ENCODE measurements at regions of chr10 and their contacts with region 1.

Region 1: DNA sequence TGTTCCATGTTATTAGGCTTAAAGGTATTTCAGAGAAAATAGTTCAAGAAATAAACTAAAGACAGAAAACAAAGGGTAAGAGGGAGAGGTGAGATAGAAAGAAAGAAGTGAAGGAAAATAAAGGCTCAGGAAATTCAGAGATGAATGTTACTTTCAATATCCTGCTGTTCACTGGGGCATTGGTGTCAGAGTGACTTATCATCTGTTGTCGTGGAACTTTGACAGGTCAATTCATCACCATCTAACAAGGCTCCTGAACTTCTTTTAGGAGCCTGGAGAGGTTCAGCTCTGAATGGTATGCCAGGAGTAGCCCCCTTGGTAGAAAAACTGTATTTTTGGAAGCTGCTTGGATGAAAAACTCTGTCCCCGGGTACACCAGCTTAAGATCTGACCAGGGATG is 100.1 kb downstream of the KLF6 start:
- DNase-seq: no peak
- H3K4me3 Mint-ChIP-seq: no peak overlapping the region
- H3K27ac Mint-ChIP-seq: no peak overlapping the region
- H3K4me1 Mint-ChIP-seq: peaks cover 15% of the 10 kb centered on the region
- H3K27me3 Mint-ChIP-seq: no peaks in the 10 kb centered on the region

Region 2: DNA sequence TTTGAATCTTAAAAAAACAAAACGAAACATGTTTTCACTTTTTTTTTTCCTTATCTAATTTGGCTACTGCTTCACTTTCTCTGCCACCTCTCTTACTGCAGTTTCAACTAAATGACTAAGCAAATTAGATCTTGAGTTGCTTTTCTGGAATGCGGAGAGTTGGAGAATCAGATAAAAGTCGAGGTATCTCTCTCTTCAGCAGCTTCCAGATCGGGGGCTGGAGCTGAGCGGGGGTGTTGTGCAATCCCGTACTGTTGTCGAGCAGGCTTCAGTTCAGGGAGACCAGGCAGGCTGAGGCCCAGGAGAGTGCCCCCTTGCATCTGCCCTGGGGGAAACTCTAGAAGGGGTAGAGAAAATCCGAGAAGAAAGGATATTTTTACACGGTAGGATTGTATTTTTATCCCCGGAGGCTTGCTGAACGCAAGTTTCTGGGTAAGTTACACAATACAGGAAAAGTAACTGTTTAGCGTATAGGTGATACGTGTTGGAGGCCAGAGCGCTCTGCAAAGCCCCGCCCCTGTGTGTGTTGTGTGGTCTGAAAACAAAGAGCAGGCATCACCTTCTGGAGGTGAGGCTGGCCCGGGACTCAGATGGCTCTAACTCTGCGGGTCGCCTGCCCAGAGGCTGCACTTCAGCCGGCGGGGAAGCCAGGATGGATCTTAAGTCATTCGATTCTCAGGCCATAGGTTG is 16.5 kb before region 1 on chr10:
- intact Hi-C with region 1: loop called (anchors 2 kb)
- DNase-seq: peak; percentile 89
- H3K4me3 Mint-ChIP-seq: peak overlapping the region; percentile 86
- H3K27ac Mint-ChIP-seq: peak overlapping the region; percentile 92
- H3K4me1 Mint-ChIP-seq: peaks cover 34% of the 10 kb centered on the region
- H3K27me3 Mint-ChIP-seq: peaks cover 2% of the 10 kb centered on the region

Measured in activated CD4-positive, alpha-beta T cell treated with anti-CD3 and anti-CD28 coated beads, Interleukin-2, amount 10 ng/mL, durations not matched to agents 24 days and 14 days (primary cell).